ENCODE measurements at regions of chr14 and their contacts with region 1.

Region 1: DNA sequence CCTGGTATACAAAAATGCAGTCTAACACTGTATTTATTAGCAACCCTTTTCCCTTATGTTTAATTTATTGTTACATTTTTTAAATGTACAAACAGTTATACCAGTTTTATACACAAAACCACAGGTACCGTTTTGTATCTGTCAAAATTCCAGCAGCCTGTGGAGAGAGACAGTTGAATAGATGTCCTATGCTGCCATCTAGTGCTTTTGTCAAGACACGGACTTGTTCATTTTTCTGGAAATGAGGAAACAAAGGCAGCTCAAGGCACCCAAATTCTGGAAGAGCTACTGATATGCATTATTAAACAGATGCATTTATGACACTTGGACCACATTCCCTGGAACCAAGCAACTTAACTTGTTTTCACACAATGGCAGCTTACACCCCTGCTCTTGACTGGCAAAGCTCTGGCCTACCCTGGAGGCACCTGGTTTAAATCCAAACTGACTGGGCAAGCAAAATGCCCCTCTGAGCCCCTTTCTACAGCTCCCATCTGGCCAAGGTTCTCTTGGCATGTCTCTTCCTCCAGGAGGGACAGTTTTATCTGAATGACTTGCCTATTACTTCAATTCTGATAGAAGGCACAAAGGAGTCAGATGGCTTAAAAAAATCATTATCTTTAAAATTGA is 286.9 kb upstream of the PRKD1 start:
- DNase-seq: no peak
- H3K4me3 ChIP-seq: no peak overlapping the region
- CTCF ChIP-seq: peak; percentile 49

Region 2: GRCh38 chr14:29548948-29549370 is 665.6 kb before region 1 on chr14:
- CTCF ChIA-PET with region 1: interaction called, 122 read pairs
- POLR2A ChIA-PET with region 1: no interaction called
- DNase-seq: peak; percentile 17
- H3K4me3 ChIP-seq: no peak overlapping the region
- CTCF ChIP-seq: peak; percentile 23

Region 3: DNA sequence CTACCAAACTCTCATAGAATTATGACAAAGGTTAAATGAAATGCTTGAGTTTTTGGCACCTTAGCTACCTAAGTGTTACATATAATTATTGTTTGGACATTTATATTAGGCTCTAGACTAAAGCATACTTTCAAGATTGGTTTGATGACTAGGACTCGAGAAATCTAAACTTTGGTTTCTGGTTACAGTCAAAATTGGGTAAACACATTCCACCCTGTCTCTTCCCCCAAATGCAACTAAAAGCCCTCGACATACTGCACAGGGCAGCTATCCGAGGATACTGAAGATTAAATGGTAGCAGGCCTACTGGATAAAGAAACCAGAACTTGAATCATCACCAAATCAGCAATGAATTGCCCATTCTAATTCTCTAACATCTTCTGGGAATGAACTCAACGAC is 656.1 kb before region 1 on chr14:
- CTCF ChIA-PET with region 1: interaction called, 122 read pairs
- POLR2A ChIA-PET with region 1: no interaction called
- DNase-seq: peak; percentile 14
- H3K4me3 ChIP-seq: no peak overlapping the region
- CTCF ChIP-seq: no peak

Region 4: DNA sequence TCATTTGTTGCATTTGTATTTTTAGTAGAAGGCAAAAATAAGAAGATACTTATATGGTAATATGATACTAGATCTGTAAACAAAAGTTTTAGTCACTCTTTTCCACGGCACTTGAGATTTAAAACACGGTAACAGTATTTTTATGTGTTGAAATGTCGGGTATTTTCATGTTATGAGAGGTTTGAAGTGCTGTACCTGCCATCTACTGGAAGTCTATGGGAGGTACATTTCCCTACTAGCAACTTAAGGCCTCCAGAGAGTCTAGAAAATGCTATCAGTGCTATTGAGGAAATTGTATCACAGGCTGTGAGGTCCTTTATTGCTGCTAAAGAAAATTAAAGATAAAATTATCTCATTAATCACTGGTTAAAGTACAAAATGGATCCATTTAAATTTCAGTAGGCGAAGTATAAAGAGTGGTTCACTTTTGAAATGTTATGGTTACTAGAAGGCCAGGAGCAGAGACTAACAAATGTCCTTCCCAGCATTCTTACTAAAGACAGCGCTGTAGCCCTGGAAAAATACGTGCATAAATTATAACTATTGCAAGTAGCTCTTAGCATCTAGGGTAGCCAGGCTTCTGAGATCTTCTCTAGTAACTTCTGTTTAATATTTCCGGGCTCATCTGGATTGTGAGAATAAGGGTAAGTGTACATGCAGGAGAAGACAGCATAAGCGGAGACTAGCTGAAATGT is 209.3 kb before region 1 on chr14:
- CTCF ChIA-PET with region 1: interaction called, 18 read pairs
- POLR2A ChIA-PET with region 1: no interaction called
- DNase-seq: peak; percentile 28
- H3K4me3 ChIP-seq: no peak overlapping the region
- CTCF ChIP-seq: peak; percentile 57

Region 5: DNA sequence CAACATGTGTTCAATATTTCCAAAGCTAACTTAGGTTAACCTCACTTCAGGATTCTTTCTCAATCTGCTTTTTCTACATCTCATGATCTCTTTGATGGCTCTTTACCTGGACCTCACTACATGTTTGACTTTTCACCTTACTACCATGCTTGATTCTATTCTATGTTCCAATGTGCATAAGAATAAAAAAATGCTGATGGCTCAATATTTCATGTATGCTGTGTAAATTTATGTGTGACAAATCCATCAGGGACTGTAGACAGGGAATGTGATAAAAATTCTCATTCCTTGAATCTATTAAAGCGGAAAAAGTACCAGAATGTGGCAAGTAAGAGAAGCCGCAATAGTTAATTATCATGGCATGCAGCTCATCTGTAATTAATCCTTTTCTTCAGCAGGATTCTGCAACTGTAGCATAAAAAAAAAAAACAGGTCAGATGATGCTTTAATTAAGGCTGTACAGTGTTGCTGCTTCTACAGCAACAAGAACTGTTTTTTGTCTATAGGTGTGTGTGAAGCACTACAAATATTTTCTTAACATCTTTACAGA is 10.1 kb before region 1 on chr14:
- CTCF ChIA-PET with region 1: interaction called, 13 read pairs
- POLR2A ChIA-PET with region 1: no interaction called
- DNase-seq: no peak
- H3K4me3 ChIP-seq: no peak overlapping the region
- CTCF ChIP-seq: no peak